ENCODE measurements at regions of chr15 and their contacts with region 1.

Region 1: GRCh38 chr15:80970018-80970658 is 19.5 kb downstream of the MESD start:
- DNase-seq: peak; percentile 71
- H3K4me3 Mint-ChIP-seq: no peak overlapping the region
- H3K27ac Mint-ChIP-seq: no peak overlapping the region
- H3K4me1 Mint-ChIP-seq: no peaks in the 10 kb centered on the region
- H3K27me3 Mint-ChIP-seq: no peaks in the 10 kb centered on the region
- CTCF ChIP-seq: peak; percentile 79

Region 2: GRCh38 chr15:80619680-80620079 is 350.5 kb before region 1 on chr15:
- CTCF ChIA-PET with region 1: interaction called, 20 read pairs
- POLR2A ChIA-PET with region 1: no interaction called
- intact Hi-C with region 1: no loop called
- DNase-seq: no peak
- H3K4me3 Mint-ChIP-seq: no peak overlapping the region
- H3K27ac Mint-ChIP-seq: no peak overlapping the region
- H3K4me1 Mint-ChIP-seq: peaks cover 24% of the 10 kb centered on the region
- H3K27me3 Mint-ChIP-seq: no peaks in the 10 kb centered on the region
- CTCF ChIP-seq: no peak

Region 3: DNA sequence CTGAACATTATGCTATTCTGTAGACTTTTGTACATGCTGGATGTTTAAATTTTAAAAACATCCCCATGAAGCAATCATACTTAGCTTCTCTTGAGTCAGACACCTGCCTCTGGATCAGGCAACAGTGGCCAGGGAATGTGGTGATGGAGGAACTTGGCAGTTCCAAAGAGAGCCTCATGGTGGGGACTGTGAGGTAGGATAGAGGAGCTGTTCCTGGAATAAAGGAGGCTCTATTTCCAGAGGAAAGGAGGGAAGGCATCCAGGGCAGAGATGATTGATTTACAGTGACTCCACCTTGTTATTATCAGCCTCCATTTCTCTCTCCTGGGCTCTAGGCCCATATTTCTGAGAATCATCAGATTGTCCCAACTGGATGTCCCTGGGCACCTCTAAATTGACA is 310.0 kb before region 1 on chr15:
- CTCF ChIA-PET with region 1: interaction called, 4 read pairs
- POLR2A ChIA-PET with region 1: no interaction called
- intact Hi-C with region 1: loop called (anchors 2 kb)
- DNase-seq: peak; percentile 63
- H3K4me3 Mint-ChIP-seq: no peak overlapping the region
- H3K27ac Mint-ChIP-seq: no peak overlapping the region
- H3K4me1 Mint-ChIP-seq: peaks cover 17% of the 10 kb centered on the region
- H3K27me3 Mint-ChIP-seq: no peaks in the 10 kb centered on the region
- CTCF ChIP-seq: peak; percentile 48

Region 4: DNA sequence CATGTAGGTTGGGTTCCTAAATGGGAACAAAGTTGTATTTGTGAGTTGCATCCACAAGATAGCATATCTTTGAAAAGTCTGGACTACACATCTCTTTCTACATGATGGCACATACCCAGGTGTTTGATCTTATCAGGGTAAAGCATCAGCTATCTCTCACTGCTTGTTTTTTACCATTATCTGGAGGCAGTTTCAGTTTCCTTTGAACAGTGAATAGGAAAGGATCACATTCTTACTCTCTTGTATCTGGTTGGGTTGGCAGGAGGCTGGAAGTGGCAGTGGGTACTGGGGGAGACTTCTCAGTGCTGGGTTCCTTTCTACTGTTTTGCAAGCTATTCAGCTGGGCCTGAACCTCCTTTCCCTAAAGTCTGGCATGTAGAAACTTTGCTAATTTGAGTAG is 186.9 kb before region 1 on chr15:
- CTCF ChIA-PET with region 1: interaction called, 133 read pairs
- POLR2A ChIA-PET with region 1: interaction called, 15 read pairs
- intact Hi-C with region 1: loop called (anchors 1 kb)
- DNase-seq: no peak
- H3K4me3 Mint-ChIP-seq: no peak overlapping the region
- H3K27ac Mint-ChIP-seq: no peak overlapping the region
- H3K4me1 Mint-ChIP-seq: peaks cover 9% of the 10 kb centered on the region
- H3K27me3 Mint-ChIP-seq: no peaks in the 10 kb centered on the region
- CTCF ChIP-seq: no peak

Region 5: DNA sequence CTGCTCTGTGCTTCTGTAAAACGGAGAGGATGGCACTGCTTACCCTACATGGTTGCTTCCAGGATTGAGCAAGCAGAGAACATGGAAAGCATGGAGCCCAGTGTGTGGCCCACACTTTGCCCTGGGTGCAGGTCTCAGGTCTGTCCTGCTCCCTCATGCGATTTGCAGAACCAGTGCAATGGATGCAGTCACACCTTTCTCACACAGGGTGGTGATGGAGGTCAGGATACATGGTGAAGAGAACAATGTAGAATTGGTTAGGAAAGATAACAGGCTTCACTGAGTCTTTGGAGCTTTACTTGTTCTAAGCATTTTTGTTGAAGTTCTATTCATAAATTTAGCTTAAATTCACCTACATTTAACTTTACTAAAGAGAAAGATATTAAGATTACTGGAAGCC is 59.1 kb before region 1 on chr15:
- CTCF ChIA-PET with region 1: interaction called, 3 read pairs
- POLR2A ChIA-PET with region 1: no interaction called
- intact Hi-C with region 1: loop called (anchors 1 kb)
- DNase-seq: peak; percentile 24
- H3K4me3 Mint-ChIP-seq: no peak overlapping the region
- H3K27ac Mint-ChIP-seq: no peak overlapping the region
- H3K4me1 Mint-ChIP-seq: peaks cover 9% of the 10 kb centered on the region
- H3K27me3 Mint-ChIP-seq: no peaks in the 10 kb centered on the region
- CTCF ChIP-seq: no peak

Region 6: GRCh38 chr15:80953936-80954778 is 16.0 kb before region 1 on chr15:
- CTCF ChIA-PET with region 1: interaction called, 12 read pairs
- POLR2A ChIA-PET with region 1: interaction called, 6 read pairs
- intact Hi-C with region 1: no loop called
- DNase-seq: peak; percentile 96
- H3K4me3 Mint-ChIP-seq: peak overlapping the region; percentile 25
- H3K27ac Mint-ChIP-seq: peak overlapping the region; percentile 81
- H3K4me1 Mint-ChIP-seq: peaks cover 44% of the 10 kb centered on the region
- H3K27me3 Mint-ChIP-seq: no peaks in the 10 kb centered on the region
- CTCF ChIP-seq: no peak